Mammary epithelial cell (primary cell): ENCODE measurements at regions of chr20 and their contacts with region 1.

Region 1: GRCh38 chr20:1212607-1213396 is 9.5 kb downstream of the C20orf202 start:
- DNase-seq: peak; percentile 65
- H3K4me3 ChIP-seq: no peak overlapping the region
- H3K27ac ChIP-seq: no peak overlapping the region
- H3K4me1 ChIP-seq: no peaks in the 10 kb centered on the region
- H3K27me3 ChIP-seq: peaks cover 1% of the 10 kb centered on the region
- CTCF ChIP-seq: peak; percentile 86

Region 2: DNA sequence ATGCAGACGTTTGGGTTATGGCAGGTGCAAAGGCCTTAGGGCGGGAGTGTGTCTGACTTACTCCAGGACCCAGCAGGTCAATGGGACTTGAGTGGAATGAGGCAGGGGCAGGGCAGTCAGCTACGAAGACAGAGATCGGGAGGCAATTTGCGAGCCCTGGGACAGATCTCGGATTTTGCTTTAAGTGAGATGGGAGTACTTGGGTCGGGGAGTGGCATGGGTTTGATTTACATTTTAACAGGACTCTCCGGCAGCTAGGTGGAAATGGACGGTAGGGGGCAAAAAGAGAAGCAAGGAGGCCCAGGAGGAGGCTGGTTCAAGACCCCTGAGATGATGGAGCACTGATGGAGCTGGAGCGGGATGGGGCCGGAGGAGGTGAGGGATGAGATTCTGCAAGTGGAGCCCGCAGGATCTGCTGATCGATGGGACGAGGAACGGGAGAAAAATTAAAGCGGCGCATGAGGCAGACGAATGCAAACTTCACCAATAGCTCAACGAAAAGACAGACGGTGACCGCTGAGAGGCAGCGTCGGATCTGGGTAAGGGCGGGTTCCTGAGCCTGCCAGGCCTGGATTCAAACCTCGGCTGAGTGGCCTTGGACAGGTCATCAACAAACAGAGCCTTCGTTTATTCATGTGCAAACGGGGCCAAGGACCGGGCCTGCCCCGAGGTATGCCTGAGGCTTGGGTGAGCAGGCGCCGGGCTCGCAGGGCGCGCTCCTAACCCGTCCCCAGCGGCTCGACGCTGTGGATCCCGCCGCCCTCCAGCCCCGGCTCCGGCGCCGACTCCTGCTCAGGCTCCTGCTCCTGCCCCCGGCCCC is 805.5 kb before region 1 on chr20:
- CTCF ChIA-PET with region 1: no interaction called
- dilution Hi-C with region 1: no loop called
- in situ Hi-C with region 1: no loop called
- intact Hi-C with region 1: no loop called
- DNase-seq: peak; percentile 77
- H3K4me3 ChIP-seq: peak overlapping the region; percentile 15 to 56 (median 48)
- H3K27ac ChIP-seq: peak overlapping the region; percentile 58
- H3K4me1 ChIP-seq: peaks cover 17% of the 10 kb centered on the region
- H3K27me3 ChIP-seq: no peaks in the 10 kb centered on the region
- CTCF ChIP-seq: peak; percentile 13

Region 3: DNA sequence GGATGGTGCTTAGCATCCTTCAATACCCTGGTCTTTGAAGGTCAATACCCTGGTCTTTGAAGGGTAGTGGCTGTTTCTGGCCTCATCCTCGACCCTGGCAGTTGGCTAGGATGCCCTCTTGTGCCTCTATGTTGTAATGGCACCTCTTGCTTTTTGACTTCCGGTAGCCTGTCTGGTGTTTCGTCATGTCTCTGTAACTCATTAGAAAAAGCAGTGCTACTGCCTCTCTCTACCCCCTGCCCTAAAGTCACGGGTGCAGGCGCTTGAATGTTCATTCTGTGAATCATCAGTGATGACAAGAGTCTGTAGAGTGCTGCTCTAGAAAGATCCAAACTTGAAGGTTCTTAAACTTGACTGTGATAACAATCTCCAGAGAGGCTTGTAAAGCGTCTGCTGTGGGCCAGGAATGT is 239.0 kb before region 1 on chr20:
- CTCF ChIA-PET with region 1: no interaction called
- dilution Hi-C with region 1: no loop called
- in situ Hi-C with region 1: loop called in 1 of 2 experiments (anchors 25 kb)
- intact Hi-C with region 1: loop called (anchors 5 kb)
- DNase-seq: peak; percentile 30
- H3K4me3 ChIP-seq: no peak overlapping the region
- H3K27ac ChIP-seq: no peak overlapping the region
- H3K4me1 ChIP-seq: no peaks in the 10 kb centered on the region
- H3K27me3 ChIP-seq: no peaks in the 10 kb centered on the region
- CTCF ChIP-seq: peak; percentile 60 to 62

Region 4: GRCh38 chr20:1108437-1108920 is 104.3 kb before region 1 on chr20:
- CTCF ChIA-PET with region 1: no interaction called
- dilution Hi-C with region 1: no loop called
- in situ Hi-C with region 1: no loop called
- intact Hi-C with region 1: loop called (anchors 1 kb)
- DNase-seq: peak; percentile 24
- H3K4me3 ChIP-seq: no peak overlapping the region
- H3K27ac ChIP-seq: no peak overlapping the region
- H3K4me1 ChIP-seq: no peaks in the 10 kb centered on the region
- H3K27me3 ChIP-seq: no peaks in the 10 kb centered on the region
- CTCF ChIP-seq: peak; percentile 78 to 84